Left ventricle myocardium superior (tissue), 1 donor: ENCODE measurements at regions of chr4 and their contacts with region 1.

Region 1: DNA sequence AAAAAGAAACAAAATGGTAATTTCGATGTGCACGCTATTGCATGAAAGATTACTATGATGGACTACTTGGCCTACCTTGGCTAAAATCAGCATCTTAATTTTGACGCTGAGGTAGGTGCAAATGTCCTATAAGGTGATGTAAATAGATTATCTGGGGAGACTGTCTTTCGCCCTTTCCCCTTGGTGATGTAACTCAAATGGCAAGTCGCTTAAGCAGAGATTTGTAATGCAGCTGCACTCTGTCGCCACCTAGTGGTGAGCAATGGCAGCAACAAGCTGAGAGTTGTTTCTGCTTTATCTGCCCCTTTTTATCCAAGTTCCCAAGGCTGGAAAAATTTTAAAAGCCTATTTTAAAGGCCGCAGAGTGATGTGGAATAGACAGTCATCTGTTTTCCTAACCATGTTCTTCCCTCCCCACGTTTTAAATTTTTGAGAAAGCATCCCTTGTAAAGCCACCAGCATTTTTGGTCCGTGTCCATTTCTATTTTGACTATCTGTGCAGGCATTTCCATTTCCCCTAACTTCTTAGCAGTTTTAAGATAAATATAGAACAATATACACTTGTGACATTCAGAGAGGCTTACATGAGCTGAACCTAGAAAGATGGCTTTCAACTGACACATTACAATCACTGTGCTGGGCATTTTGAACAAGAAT is 62.4 kb upstream of the PDLIM3 start:
- DNase-seq: peak; percentile 79
- ATAC-seq: peak; percentile 52

Region 2: GRCh38 chr4:184575306-184575705 is 1022.4 kb before region 1 on chr4:
- intact Hi-C with region 1: no loop called
- DNase-seq: no peak
- ATAC-seq: no peak

Region 3: GRCh38 chr4:185471235-185472102 is 126.2 kb before region 1 on chr4 and contains the start of gene CCDC110:
- intact Hi-C with region 1: loop called (anchors 5 kb)
- DNase-seq: peak; percentile 95
- ATAC-seq: peak; percentile 98
- total RNA-seq, gene CCDC110: 0.99 TPM

Region 4: DNA sequence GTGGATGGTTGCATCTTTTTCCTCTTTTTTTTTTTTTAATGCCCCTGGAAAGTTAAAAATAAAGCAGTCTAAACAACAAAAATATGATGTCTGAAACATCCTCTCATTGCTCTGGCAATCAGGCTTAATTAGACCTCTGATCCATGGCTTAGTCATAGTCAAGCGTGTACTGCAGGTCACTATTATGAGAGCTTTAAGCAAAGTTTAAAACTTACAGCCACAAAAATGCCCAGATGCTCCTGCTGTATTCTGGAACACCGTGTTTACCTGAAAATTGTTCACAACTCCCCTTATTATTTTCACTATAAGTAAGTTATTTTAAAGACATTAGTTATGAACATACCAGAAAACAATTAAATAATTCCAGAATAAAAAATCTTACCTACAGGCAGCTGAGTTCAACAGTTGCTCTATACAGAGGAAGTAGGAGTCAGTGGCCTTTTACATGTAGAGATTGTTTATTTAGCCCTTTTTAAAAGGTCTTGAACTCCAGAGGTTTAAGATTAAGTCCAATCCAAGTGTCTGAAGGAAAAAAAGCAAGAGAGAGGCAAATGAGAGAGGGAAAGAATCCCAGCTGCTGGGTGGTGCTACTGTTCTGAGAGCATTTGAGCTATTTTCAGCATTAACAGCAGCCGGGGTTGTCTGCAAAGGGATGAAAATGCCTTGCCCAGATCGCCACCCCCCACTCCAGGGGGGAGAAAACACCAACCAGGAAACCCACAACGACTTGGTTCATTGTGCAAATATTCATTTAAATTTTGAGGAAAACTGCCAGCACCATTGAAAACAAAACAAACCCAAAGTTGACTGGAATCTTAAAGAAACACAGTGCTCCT is 177.4 kb after region 1 on chr4:
- intact Hi-C with region 1: no loop called
- DNase-seq: no peak
- ATAC-seq: peak; percentile 49